ENCODE measurements at regions of chr20 and their contacts with region 1.

Region 1: GRCh38 chr20:62237801-62238571 is at the start of gene OSBPL2:
- DNase-seq: peak; percentile 97 to 100
- H3K4me3 ChIP-seq: peak within 1 kb of the TSS; percentile 90
- H3K27ac ChIP-seq: peak within 1 kb of the TSS; percentile 41
- H3K4me1 ChIP-seq: peaks cover 37% of the 10 kb centered on the region
- H3K27me3 ChIP-seq: no peaks in the 10 kb centered on the region
- CTCF ChIP-seq: no peak
- total RNA-seq, gene OSBPL2: 84.8 and 90.7 TPM in 2 replicates

Region 2: DNA sequence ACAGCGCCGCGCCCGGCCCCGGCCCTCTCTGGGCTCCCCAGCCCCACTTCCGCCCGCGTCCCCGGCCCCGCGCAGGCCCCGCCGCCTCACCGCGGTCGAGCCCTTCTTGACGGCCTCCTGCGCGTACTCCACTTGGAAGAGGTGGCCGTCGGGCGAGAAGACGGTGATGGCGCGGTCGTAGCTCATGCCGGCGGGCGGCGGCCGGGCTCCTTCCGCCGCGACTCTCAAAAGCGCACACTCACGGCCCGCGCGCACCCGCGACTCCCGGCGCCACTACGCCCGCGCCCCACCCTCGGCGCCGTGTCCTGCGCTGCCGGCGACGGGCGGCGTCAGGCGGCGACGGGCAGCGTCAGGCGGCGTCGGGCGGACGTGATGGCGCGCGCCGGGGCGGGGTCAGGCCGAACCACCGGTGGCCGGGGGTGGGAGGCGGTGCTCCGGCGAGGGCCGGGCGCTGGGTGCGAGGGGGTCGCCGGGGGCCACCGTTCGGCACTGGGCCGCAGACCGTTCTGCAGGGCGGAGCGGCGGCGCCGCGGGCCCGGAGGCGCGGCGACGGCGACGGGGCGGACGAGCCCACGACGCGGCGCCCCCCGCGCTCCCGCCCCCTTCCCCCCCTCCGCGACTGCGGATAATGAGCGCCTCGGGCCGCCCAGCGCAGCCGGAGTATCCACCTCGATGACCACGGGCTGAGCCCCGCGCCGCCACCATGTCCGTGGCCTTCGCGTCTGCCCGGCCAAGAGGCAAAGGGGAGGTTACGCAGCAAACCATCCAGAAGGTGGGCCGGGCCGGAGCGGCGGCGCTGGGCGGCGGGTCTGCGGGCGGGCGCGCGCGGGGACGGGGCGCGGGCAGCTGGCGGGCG is 94.6 kb before region 1 on chr20 and contains the starts of genes PSMA7 and SS18L1:
- CTCF ChIA-PET with region 1: no interaction called
- POLR2A ChIA-PET with region 1: no interaction called
- intact Hi-C with region 1: loop called (anchors 1 kb)
- DNase-seq: peak; percentile 65 to 89
- H3K4me3 ChIP-seq: peak within 1 kb of the TSS; percentile 98
- H3K27ac ChIP-seq: peak within 1 kb of the TSS; percentile 42
- H3K4me1 ChIP-seq: peaks cover 26% of the 10 kb centered on the region
- H3K27me3 ChIP-seq: no peaks in the 10 kb centered on the region
- CTCF ChIP-seq: no peak
- total RNA-seq, gene PSMA7: 367 and 391 TPM in 2 replicates
- total RNA-seq, gene SS18L1: 22.4 and 29.0 TPM in 2 replicates

Region 3: GRCh38 chr20:62182613-62183425 is 55.2 kb before region 1 on chr20 and contains the start of gene MTG2:
- CTCF ChIA-PET with region 1: no interaction called
- POLR2A ChIA-PET with region 1: no interaction called
- intact Hi-C with region 1: loop called (anchors 2 kb)
- DNase-seq: peak; percentile 92 to 93
- H3K4me3 ChIP-seq: peak within 1 kb of the TSS; percentile 81
- H3K27ac ChIP-seq: peak within 1 kb of the TSS; percentile 58
- H3K4me1 ChIP-seq: peaks cover 20% of the 10 kb centered on the region
- H3K27me3 ChIP-seq: no peaks in the 10 kb centered on the region
- CTCF ChIP-seq: no peak
- total RNA-seq, gene MTG2: 58.1 and 62.5 TPM in 2 replicates

Region 4: GRCh38 chr20:62266340-62266739 is 28.4 kb after region 1 on chr20:
- CTCF ChIA-PET with region 1: interaction called, 3 read pairs
- POLR2A ChIA-PET with region 1: no interaction called
- intact Hi-C with region 1: loop called (anchors 2 kb)
- DNase-seq: no peak
- H3K4me3 ChIP-seq: no peak overlapping the region
- H3K27ac ChIP-seq: no peak overlapping the region
- H3K4me1 ChIP-seq: no peaks in the 10 kb centered on the region
- H3K27me3 ChIP-seq: no peaks in the 10 kb centered on the region
- CTCF ChIP-seq: no peak

Region 5: DNA sequence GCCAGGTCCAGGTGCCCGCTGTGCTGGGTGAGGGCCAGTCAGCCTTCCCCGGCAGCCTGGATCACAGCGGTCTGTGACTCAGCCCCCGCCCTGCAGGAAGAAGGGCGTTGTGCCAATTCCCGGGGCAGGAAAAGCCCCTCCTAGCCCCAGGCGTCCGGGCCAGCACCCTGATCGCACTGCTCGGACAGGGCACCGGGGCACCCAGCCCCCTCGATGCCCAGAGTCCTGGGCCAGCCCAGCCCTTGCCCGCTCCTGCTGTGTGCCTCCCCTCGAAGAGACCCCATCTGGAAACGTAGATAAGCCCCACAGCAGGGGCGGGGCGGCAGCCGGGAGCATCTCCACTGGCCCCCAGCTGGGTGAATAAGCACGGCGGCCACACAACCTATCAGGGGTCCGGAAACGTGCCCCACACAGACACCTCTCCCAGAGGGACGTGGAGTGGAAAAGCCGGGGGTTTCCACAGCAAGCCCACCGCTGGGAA is 119.2 kb after region 1 on chr20:
- CTCF ChIA-PET with region 1: no interaction called
- POLR2A ChIA-PET with region 1: no interaction called
- intact Hi-C with region 1: no loop called
- DNase-seq: peak; percentile 74 to 96
- H3K4me3 ChIP-seq: peak overlapping the region; percentile 55
- H3K27ac ChIP-seq: peak overlapping the region; percentile 86
- H3K4me1 ChIP-seq: peaks cover 92% of the 10 kb centered on the region
- H3K27me3 ChIP-seq: no peaks in the 10 kb centered on the region
- CTCF ChIP-seq: no peak

Region 6: DNA sequence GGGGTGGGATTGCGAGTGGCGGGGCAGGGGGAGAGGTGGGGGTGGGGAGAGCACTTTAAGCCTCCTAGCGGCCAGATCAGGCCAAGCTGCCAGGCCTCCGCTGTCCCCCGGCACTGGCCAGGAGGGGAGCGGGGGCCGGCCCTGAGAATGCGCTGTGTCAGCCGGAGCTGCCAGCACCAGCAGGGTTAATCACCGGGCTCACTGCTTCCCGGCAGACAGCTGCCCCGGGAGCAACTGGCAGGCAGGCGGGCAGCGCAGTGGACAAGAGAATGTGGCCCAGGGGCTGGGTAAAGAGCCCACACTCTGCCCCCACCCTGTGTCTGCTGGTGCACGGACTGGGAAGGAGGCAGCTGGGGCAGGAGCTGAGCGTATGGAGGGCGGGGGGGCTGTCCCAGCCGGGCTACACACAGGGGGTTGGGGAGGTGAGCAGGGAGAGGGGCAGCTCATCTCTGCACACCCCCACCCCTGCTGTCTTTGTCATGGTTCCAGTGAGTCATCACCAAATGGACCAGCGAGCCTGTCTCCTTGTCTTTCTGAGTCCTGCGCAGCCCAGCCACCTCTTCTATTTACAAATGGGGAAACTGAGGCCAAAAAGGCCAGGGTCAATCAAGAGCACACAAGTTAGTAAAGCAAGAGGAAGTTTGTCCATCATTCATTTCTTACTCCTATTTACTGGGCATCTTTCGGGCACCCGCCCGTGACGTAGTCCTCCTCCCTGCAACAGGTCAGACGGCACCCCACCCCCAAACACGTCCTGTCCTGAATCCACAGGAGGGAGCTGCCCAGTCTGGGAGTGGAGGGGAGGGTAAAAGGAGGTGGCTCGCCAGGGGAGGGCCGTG is 131.2 kb after region 1 on chr20:
- CTCF ChIA-PET with region 1: no interaction called
- POLR2A ChIA-PET with region 1: interaction called, 3 read pairs
- intact Hi-C with region 1: loop called (anchors 2 kb)
- DNase-seq: peak; percentile 53 to 79
- H3K4me3 ChIP-seq: peak overlapping the region; percentile 58; the same call in 1 of the 2 replicates
- H3K27ac ChIP-seq: peak overlapping the region; percentile 35; the same call in 1 of the 2 replicates
- H3K4me1 ChIP-seq: peaks cover 44% of the 10 kb centered on the region
- H3K27me3 ChIP-seq: no peaks in the 10 kb centered on the region
- CTCF ChIP-seq: peak; percentile 23; the same call in 1 of the 2 replicates

Region 7: GRCh38 chr20:62911701-62912280 is 673.8 kb after region 1 on chr20:
- CTCF ChIA-PET with region 1: no interaction called
- POLR2A ChIA-PET with region 1: interaction called, 11 read pairs
- intact Hi-C with region 1: no loop called
- DNase-seq: no peak
- H3K4me3 ChIP-seq: no peak overlapping the region
- H3K27ac ChIP-seq: no peak overlapping the region
- H3K4me1 ChIP-seq: no peaks in the 10 kb centered on the region
- H3K27me3 ChIP-seq: no peaks in the 10 kb centered on the region
- CTCF ChIP-seq: no peak